ENCODE measurements at regions of chr12 and their contacts with region 1.

Region 1: DNA sequence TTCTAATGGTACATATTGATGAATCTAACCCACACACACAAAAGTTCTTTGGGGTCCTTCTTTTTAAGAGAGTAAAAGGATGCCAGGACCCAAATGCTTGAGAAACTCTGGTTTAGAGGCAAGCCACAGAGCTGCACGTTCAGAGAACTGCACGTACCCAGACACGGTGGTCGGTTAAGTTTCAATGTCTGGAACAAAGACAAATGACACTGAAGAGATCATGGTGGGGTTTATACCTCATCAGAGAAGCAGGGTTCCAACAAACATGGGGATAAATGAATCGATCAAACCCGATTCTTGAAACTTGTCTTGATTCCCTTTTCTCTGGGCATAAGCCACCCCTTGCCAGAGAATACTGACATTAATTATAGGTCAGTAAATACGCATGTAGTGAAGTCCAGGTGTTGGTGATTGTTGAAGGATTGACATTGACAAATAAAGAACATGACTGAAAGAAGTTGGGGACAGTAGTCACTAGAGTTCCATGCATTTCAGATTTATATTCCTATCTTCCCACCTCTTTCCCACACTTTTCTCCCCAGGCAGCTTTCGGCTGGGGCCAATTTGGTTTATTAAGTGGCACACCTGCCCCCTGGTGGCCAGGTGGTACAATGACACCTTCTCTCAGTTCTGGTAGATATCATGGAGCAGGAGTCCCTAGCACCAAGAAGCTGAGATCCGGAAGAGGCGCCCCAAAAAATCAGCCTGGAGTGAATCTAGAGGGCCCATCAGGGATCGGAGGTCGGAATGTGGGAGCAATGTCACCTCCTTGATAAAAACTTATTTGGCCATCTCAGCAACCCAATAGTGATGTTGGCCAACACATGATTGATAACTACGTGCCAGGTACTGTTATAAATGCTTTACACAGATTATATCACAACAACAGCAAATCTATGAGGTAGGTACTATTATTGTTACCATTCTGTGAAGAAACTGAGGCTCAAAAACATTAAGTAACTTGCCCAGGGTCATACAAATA is 17.8 kb upstream of the HDAC7 start:
- DNase-seq: peak; percentile 47 to 78 (median 66)
- H3K4me3 ChIP-seq: no peak overlapping the region
- H3K4me3 Mint-ChIP-seq: peak overlapping the region in 1 of 2 donors; percentile 22
- H3K27ac ChIP-seq: no peak overlapping the region
- H3K27ac Mint-ChIP-seq: no peak overlapping the region
- H3K4me1 ChIP-seq: peaks cover 17 to 26% of the 10 kb centered on the region in 2 donors
- H3K4me1 Mint-ChIP-seq: peaks cover 33% of the 10 kb centered on the region
- H3K27me3 ChIP-seq: no peaks in the 10 kb centered on the region
- H3K27me3 Mint-ChIP-seq: peaks cover 4 to 7% (median 5%) of the 10 kb centered on the region in 3 donors
- CTCF ChIP-seq: peak; percentile 97

Region 2: GRCh38 chr12:47715393-47715876 is 122.0 kb before region 1 on chr12:
- intact Hi-C with region 1: loop called (anchors 2 to 5 kb)
- DNase-seq: peak; percentile 75 to 91 (median 84)
- H3K4me3 ChIP-seq: peak overlapping the region in 1 of 3 experiments; percentile 12
- H3K4me3 Mint-ChIP-seq: peak overlapping the region in 1 of 2 donors; percentile 39
- H3K27ac ChIP-seq: no peak overlapping the region
- H3K27ac Mint-ChIP-seq: peak overlapping the region; percentile 21 to 88 (median 81)
- H3K4me1 ChIP-seq: peaks cover 38 to 41% of the 10 kb centered on the region in 2 donors
- H3K4me1 Mint-ChIP-seq: peaks cover 50% of the 10 kb centered on the region
- H3K27me3 ChIP-seq: no peaks in the 10 kb centered on the region
- H3K27me3 Mint-ChIP-seq: peaks cover 2 to 7% (median 4%) of the 10 kb centered on the region in 3 donors
- CTCF ChIP-seq: peak; percentile 80

Region 3: GRCh38 chr12:47742253-47742825 is 95.1 kb before region 1 on chr12:
- intact Hi-C with region 1: loop called in 1 of 2 experiments (anchors 2 kb)
- DNase-seq: peak; percentile 43 to 65 (median 64)
- H3K4me3 ChIP-seq: no peak overlapping the region
- H3K4me3 Mint-ChIP-seq: no peak overlapping the region
- H3K27ac ChIP-seq: no peak overlapping the region
- H3K27ac Mint-ChIP-seq: no peak overlapping the region
- H3K4me1 ChIP-seq: peaks cover 21 to 26% of the 10 kb centered on the region in 2 donors
- H3K4me1 Mint-ChIP-seq: peaks cover 40% of the 10 kb centered on the region
- H3K27me3 ChIP-seq: no peaks in the 10 kb centered on the region
- H3K27me3 Mint-ChIP-seq: peaks cover 16 to 26% (median 18%) of the 10 kb centered on the region in 3 donors
- CTCF ChIP-seq: peak; percentile 100

Region 4: DNA sequence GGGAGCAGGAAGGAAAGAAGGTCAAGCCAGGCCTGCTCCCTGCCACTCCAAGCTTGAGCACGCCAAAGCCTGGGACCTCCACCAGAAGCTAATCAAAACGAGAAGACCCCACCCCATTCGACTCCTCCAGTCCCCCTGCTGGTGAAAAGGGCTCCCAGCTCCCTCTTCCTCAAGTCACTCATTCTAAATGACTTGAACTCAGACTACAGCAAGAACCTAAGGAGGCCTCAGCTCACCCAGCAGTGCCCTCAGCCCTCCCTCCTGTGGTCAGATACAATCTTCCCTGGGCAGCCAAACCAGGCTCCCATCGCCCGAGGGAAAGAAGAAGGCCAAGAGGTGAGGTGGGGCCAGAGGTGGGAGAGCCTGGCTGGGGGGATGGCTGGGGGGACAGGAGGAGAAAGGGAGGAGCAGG is 35.2 kb before region 1 on chr12:
- intact Hi-C with region 1: loop called (anchors 2 to 5 kb)
- DNase-seq: no peak
- H3K4me3 ChIP-seq: peak overlapping the region in 1 of 3 experiments; percentile 53
- H3K4me3 Mint-ChIP-seq: peak overlapping the region; percentile 49 to 79
- H3K27ac ChIP-seq: peak overlapping the region; percentile 78 to 86
- H3K27ac Mint-ChIP-seq: peak overlapping the region; percentile 73 to 94 (median 86)
- H3K4me1 ChIP-seq: peaks cover 52 to 65% of the 10 kb centered on the region in 2 donors
- H3K4me1 Mint-ChIP-seq: peaks cover 77% of the 10 kb centered on the region
- H3K27me3 ChIP-seq: no peaks in the 10 kb centered on the region
- H3K27me3 Mint-ChIP-seq: peaks cover 0 to 3% (median 0%) of the 10 kb centered on the region in 3 donors
- CTCF ChIP-seq: peak; percentile 30